ENCODE measurements at regions of chr9 and their contacts with region 1.

Region 1: GRCh38 chr9:85960688-85961093 is 19.7 kb downstream of the NAA35 start:
- DNase-seq: peak; percentile 76
- H3K4me3 ChIP-seq: peak overlapping the region; percentile 5
- H3K27ac ChIP-seq: peak overlapping the region; percentile 13
- H3K4me1 ChIP-seq: peaks cover 19% of the 10 kb centered on the region
- H3K27me3 ChIP-seq: no peaks in the 10 kb centered on the region
- CTCF ChIP-seq: no peak

Region 2: GRCh38 chr9:85971731-85972130 is 11.0 kb after region 1 on chr9:
- CTCF ChIA-PET with region 1: no interaction called
- POLR2A ChIA-PET with region 1: no interaction called
- intact Hi-C with region 1: no loop called
- DNase-seq: no peak
- H3K4me3 ChIP-seq: no peak overlapping the region
- H3K27ac ChIP-seq: no peak overlapping the region
- H3K4me1 ChIP-seq: no peaks in the 10 kb centered on the region
- H3K27me3 ChIP-seq: no peaks in the 10 kb centered on the region
- CTCF ChIP-seq: no peak

Region 3: DNA sequence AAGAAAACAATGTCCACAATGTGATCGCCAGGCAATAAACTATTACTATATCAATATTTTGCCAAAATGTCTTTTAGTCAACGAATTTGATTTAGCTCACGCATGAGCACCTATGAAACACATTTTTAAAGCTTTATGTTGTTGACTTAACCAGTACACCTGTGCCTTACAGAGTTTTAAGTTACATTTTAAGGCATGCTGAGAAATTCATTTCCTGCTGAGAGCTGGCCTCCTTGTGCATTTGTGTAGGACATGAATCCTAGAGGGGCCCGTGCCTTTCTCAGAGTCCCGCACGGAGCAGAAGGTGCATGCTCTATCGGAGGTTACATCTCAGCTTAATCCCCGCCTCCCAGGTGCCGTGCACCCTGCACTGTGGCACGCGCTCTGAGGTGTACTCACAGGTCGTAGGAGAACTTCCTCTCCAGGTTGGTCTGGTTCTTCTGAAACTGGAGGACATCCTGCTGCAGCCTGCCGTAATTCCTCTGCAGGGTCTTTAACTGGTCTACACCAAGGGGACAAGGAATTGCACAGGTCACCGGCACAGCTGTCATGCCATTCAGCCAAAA is 85.5 kb after region 1 on chr9:
- CTCF ChIA-PET with region 1: interaction called, 19 read pairs
- POLR2A ChIA-PET with region 1: no interaction called
- intact Hi-C with region 1: no loop called
- DNase-seq: no peak
- H3K4me3 ChIP-seq: no peak overlapping the region
- H3K27ac ChIP-seq: no peak overlapping the region
- H3K4me1 ChIP-seq: no peaks in the 10 kb centered on the region
- H3K27me3 ChIP-seq: no peaks in the 10 kb centered on the region
- CTCF ChIP-seq: no peak

Measured in A673 (cell line).